ENCODE measurements at regions of chrX and their contacts with region 1.

Region 1: GRCh38 chrX:101097546-101098453 is at the start of gene CENPI:
- DNase-seq: peak; percentile 91 to 96
- ATAC-seq: peak; percentile 99 to 100 (median 100)
- H3K4me3 ChIP-seq: peak within 1 kb of the TSS; percentile 60
- H3K27ac ChIP-seq: peak within 1 kb of the TSS; percentile 75
- H3K4me1 ChIP-seq: no peaks in the 10 kb centered on the region
- H3K27me3 ChIP-seq: no peaks in the 10 kb centered on the region
- CTCF ChIP-seq: no peak
- total RNA-seq, gene CENPI: 0.10 to 0.34 (median 0.25) TPM

Region 2: DNA sequence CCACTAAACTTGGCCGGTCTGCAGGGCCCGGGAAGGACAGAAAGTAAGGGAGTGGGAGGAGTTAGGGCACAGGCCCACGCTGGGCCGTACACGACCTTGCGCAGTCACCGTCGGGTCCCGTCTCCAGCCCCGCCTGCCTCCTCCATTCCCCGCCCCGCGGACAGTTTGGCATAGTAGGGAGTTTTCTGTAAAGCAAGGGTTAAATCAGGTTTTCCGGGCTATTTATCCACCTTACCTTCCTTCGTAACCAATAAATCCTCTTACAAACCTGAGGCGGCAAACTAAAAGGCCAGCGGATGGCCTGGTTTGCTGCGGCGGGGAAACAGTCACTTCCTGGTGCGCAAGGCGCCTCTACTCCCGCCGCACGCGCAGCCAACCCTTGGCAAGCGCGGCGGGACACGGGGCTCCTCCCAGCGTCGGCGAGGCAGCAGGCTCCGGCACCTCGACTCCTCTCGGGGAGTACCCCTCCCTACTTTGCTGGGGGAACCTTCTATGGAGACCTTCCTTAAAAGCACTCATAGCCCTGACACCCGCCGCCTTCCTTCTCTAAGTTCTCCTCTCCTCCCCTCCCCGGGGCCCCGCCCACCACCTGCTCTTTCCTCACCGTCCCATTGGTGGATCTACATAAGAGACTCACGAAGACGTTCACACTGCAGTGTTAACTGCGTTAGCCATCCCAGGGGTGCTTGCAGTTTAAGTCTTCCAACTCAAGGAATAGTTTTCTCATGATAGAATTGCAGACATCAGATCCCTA is 46.1 kb before region 1 on chrX and contains the start of gene TRMT2B:
- intact Hi-C with region 1: loop called in 1 of 2 experiments (anchors 5 kb)
- DNase-seq: peak; percentile 80 to 87
- ATAC-seq: peak; percentile 98
- H3K4me3 ChIP-seq: peak within 1 kb of the TSS; percentile 78
- H3K27ac ChIP-seq: peak within 1 kb of the TSS; percentile 92
- H3K4me1 ChIP-seq: peaks cover 6% of the 10 kb centered on the region
- H3K27me3 ChIP-seq: no peaks in the 10 kb centered on the region
- CTCF ChIP-seq: no peak
- total RNA-seq, gene TRMT2B: 10.5 to 19.5 (median 13.3) TPM